ENCODE measurements at regions of chr11 and their contacts with region 1.

Region 1: GRCh38 chr11:78715639-78716311 is 141.1 kb upstream of the NARS2 start:
- DNase-seq: peak; percentile 99
- ATAC-seq: peak; percentile 90
- H3K4me3 ChIP-seq: no peak overlapping the region
- H3K27ac ChIP-seq: peak overlapping the region; percentile 77
- H3K4me1 ChIP-seq: peaks cover 33% of the 10 kb centered on the region
- H3K27me3 ChIP-seq: no peaks in the 10 kb centered on the region
- CTCF ChIP-seq: peak; percentile 98

Region 2: GRCh38 chr11:78690352-78690987 is 25.3 kb before region 1 on chr11:
- CTCF ChIA-PET with region 1: interaction called, 3 read pairs
- POLR2A ChIA-PET with region 1: no interaction called
- intact Hi-C with region 1: loop called (anchors 1 kb)
- DNase-seq: peak; percentile 88
- ATAC-seq: peak; percentile 87
- H3K4me3 ChIP-seq: no peak overlapping the region
- H3K27ac ChIP-seq: peak overlapping the region; percentile 67
- H3K4me1 ChIP-seq: peaks cover 56% of the 10 kb centered on the region
- H3K27me3 ChIP-seq: no peaks in the 10 kb centered on the region
- CTCF ChIP-seq: no peak

Region 3: DNA sequence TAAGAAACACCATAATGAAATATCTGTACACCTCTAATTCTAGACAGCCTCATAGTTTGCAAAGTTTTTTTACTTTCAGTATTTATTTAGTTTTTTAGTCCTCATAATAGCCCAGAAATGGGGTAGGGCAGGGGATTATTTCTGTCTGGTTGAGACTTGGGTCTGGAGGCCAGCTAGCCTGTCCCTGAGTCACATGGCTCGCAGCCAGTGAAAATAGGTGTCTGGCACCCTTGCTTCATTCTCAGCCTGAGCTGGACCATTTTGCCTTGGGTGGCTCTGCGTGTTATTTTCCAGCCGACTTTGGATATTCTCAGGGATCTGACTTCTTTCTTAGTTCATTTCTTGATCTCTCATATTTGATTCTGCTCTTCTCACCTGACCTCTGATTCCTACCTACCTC is 17.2 kb before region 1 on chr11:
- CTCF ChIA-PET with region 1: interaction called, 13 read pairs
- POLR2A ChIA-PET with region 1: interaction called, 3 read pairs
- intact Hi-C with region 1: no loop called
- DNase-seq: peak; percentile 97
- ATAC-seq: peak; percentile 98
- H3K4me3 ChIP-seq: no peak overlapping the region
- H3K27ac ChIP-seq: no peak overlapping the region
- H3K4me1 ChIP-seq: peaks cover 12% of the 10 kb centered on the region
- H3K27me3 ChIP-seq: no peaks in the 10 kb centered on the region
- CTCF ChIP-seq: no peak

Region 4: DNA sequence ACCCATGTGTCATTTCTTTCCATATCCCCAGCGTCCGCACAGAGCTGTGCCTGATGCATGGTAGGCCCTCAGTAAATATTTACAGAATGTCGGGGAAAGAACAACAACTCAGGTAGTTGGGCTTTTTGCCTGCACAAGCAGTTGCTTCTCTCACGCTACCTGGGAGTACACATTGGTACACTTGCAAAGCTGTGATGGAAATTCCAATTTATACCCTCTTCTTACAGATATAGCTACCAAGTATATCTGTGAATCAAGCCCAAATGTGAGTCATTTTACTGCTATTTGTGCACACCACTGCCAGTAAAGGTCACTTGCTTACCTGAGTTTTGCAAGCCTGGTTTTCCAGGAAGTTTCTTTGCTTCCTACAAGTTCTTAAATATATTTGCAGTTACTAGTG is 191.9 kb after region 1 on chr11:
- CTCF ChIA-PET with region 1: interaction called, 6 read pairs
- POLR2A ChIA-PET with region 1: no interaction called
- intact Hi-C with region 1: loop called (anchors 1 kb)
- DNase-seq: peak; percentile 98
- ATAC-seq: peak; percentile 85
- H3K4me3 ChIP-seq: peak overlapping the region; percentile 47
- H3K27ac ChIP-seq: peak overlapping the region; percentile 97
- H3K4me1 ChIP-seq: peaks cover 35% of the 10 kb centered on the region
- H3K27me3 ChIP-seq: no peaks in the 10 kb centered on the region
- CTCF ChIP-seq: no peak

Region 5: GRCh38 chr11:79342686-79343085 is 626.9 kb after region 1 on chr11:
- CTCF ChIA-PET with region 1: no interaction called
- POLR2A ChIA-PET with region 1: no interaction called
- intact Hi-C with region 1: no loop called
- DNase-seq: no peak
- ATAC-seq: no peak
- H3K4me3 ChIP-seq: no peak overlapping the region
- H3K27ac ChIP-seq: no peak overlapping the region
- H3K4me1 ChIP-seq: no peaks in the 10 kb centered on the region
- H3K27me3 ChIP-seq: peaks cover 42% of the 10 kb centered on the region
- CTCF ChIP-seq: no peak